HepG2 (cell line): ENCODE measurements at regions of chr19 and their contacts with region 1.

Region 1: GRCh38 chr19:35315883-35316282 is 13.1 kb upstream of the CD22 start:
- DNase-seq: peak; percentile 67
- ATAC-seq: peak; percentile 79
- H3K4me3 ChIP-seq: peak overlapping the region in 1 of 3 experiments; percentile 45; a peak in 2 of 6 replicates
- H3K27ac ChIP-seq: peak overlapping the region; percentile 78
- H3K4me1 ChIP-seq: peaks cover 86% of the 10 kb centered on the region
- H3K27me3 ChIP-seq: no peaks in the 10 kb centered on the region
- CTCF ChIP-seq: peak; percentile 61
- EP300 ChIP-seq: no peak
- POLR2A ChIP-seq: no peak
- RAD21 ChIP-seq: peak; percentile 81

Region 2: GRCh38 chr19:35279985-35280821 is 35.7 kb before region 1 on chr19:
- CTCF ChIA-PET with region 1: no interaction called
- POLR2A ChIA-PET with region 1: interaction called, 4 read pairs
- in situ Hi-C with region 1: no loop called
- intact Hi-C with region 1: loop called (anchors 1 kb)
- DNase-seq: peak; percentile 91
- ATAC-seq: peak; percentile 80
- H3K4me3 ChIP-seq: no peak overlapping the region; a peak in 1 of 6 replicates
- H3K27ac ChIP-seq: peak overlapping the region; percentile 77
- H3K4me1 ChIP-seq: peaks cover 61% of the 10 kb centered on the region
- H3K27me3 ChIP-seq: no peaks in the 10 kb centered on the region
- CTCF ChIP-seq: no peak
- EP300 ChIP-seq: peak; percentile 77 to 84; a peak in 2 of 4 replicates
- POLR2A ChIP-seq: peak; percentile 21 to 43; a peak in 3 of 4 replicates
- RAD21 ChIP-seq: peak; percentile 69